ENCODE measurements at regions of chr2 and their contacts with region 1.

Region 1: GRCh38 chr2:172084734-172085459 is 410 bp upstream of the DLX1 start:
- H3K4me3 ChIP-seq: peak overlapping the region; percentile 58
- H3K27ac ChIP-seq: peak overlapping the region; percentile 95
- H3K4me1 ChIP-seq: no peaks in the 10 kb centered on the region; the same call in 1 of the 2 replicates
- CTCF ChIP-seq: peak; percentile 81

Region 2: GRCh38 chr2:171922230-171923022 is 162.5 kb before region 1 on chr2 and contains the start of gene HAT1:
- CTCF ChIA-PET with region 1: interaction called, 3 read pairs
- POLR2A ChIA-PET with region 1: interaction called, 14 read pairs
- H3K4me3 ChIP-seq: peak within 1 kb of the TSS; percentile 84
- H3K27ac ChIP-seq: peak within 1 kb of the TSS; percentile 91
- H3K4me1 ChIP-seq: peaks cover 2% of the 10 kb centered on the region
- CTCF ChIP-seq: peak; percentile 32

Region 3: GRCh38 chr2:172052000-172052983 is 32.6 kb before region 1 on chr2:
- CTCF ChIA-PET with region 1: no interaction called
- POLR2A ChIA-PET with region 1: interaction called, 16 read pairs
- H3K4me3 ChIP-seq: no peak overlapping the region
- H3K27ac ChIP-seq: peak overlapping the region; percentile 18
- H3K4me1 ChIP-seq: peaks cover 14% of the 10 kb centered on the region
- CTCF ChIP-seq: no peak

Region 4: GRCh38 chr2:172119089-172119488 is 34.2 kb after region 1 on chr2:
- CTCF ChIA-PET with region 1: no interaction called
- POLR2A ChIA-PET with region 1: no interaction called
- H3K4me3 ChIP-seq: no peak overlapping the region
- H3K27ac ChIP-seq: no peak overlapping the region
- H3K4me1 ChIP-seq: no peaks in the 10 kb centered on the region
- CTCF ChIP-seq: no peak